Activated CD8-positive, alpha-beta T cell treated with anti-CD3 and anti-CD28 coated beads, Interleukin-2, amount 10 ng/mL, durations not matched to agents 7 days and 5 days (primary cell): ENCODE measurements at regions of chr2 and their contacts with region 1.

Region 1: GRCh38 chr2:85551698-85552678 is 9.3 kb downstream of the GGCX start:
- DNase-seq: peak; percentile 94
- ATAC-seq: peak; percentile 79
- H3K4me3 Mint-ChIP-seq: no peak overlapping the region
- H3K27ac Mint-ChIP-seq: peak overlapping the region; percentile 23
- H3K4me1 Mint-ChIP-seq: peaks cover 6% of the 10 kb centered on the region
- H3K27me3 Mint-ChIP-seq: no peaks in the 10 kb centered on the region

Region 2: DNA sequence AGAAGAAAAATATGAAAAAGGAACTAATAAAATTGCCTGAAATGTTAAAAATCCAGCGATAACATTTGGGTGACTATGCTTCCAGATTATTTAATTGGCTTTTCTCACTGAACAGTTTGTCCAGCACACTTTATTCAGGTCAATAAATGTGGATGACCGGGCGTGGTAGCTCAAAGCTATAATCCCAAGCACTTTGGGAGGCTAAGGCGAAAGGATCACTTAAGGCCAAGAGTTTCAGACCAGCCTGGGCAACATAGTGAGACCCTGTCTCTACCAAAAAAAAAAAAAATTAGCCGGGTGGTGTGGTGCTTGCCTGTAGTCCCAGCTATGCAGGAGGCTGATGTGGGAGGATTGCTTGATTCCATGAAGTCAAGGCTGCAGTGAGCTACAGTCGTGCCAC is 279.6 kb before region 1 on chr2:
- CTCF ChIA-PET with region 1: no interaction called
- POLR2A ChIA-PET with region 1: no interaction called
- DNase-seq: no peak
- ATAC-seq: no peak
- H3K4me3 Mint-ChIP-seq: no peak overlapping the region
- H3K27ac Mint-ChIP-seq: no peak overlapping the region
- H3K4me1 Mint-ChIP-seq: no peaks in the 10 kb centered on the region
- H3K27me3 Mint-ChIP-seq: peaks cover 12% of the 10 kb centered on the region

Region 3: GRCh38 chr2:85390941-85391669 is 160.9 kb before region 1 on chr2:
- CTCF ChIA-PET with region 1: interaction called, 69 read pairs
- POLR2A ChIA-PET with region 1: interaction called, 4 read pairs
- DNase-seq: peak; percentile 82
- ATAC-seq: peak; percentile 82
- H3K4me3 Mint-ChIP-seq: no peak overlapping the region
- H3K27ac Mint-ChIP-seq: no peak overlapping the region
- H3K4me1 Mint-ChIP-seq: peaks cover 18% of the 10 kb centered on the region
- H3K27me3 Mint-ChIP-seq: no peaks in the 10 kb centered on the region

Region 4: GRCh38 chr2:85420536-85421259 is 131.3 kb before region 1 on chr2:
- CTCF ChIA-PET with region 1: interaction called, 263 read pairs
- POLR2A ChIA-PET with region 1: interaction called, 39 read pairs
- DNase-seq: peak; percentile 92
- ATAC-seq: peak; percentile 69
- H3K4me3 Mint-ChIP-seq: peak overlapping the region; percentile 69
- H3K27ac Mint-ChIP-seq: peak overlapping the region; percentile 89
- H3K4me1 Mint-ChIP-seq: peaks cover 42% of the 10 kb centered on the region
- H3K27me3 Mint-ChIP-seq: no peaks in the 10 kb centered on the region

Region 5: GRCh38 chr2:85538486-85539360 is 13.3 kb before region 1 on chr2 and contains the start of gene MAT2A:
- CTCF ChIA-PET with region 1: interaction called, 133 read pairs
- POLR2A ChIA-PET with region 1: interaction called, 51 read pairs
- DNase-seq: peak; percentile 88
- ATAC-seq: peak; percentile 71
- H3K4me3 Mint-ChIP-seq: peak within 1 kb of the TSS; percentile 96
- H3K27ac Mint-ChIP-seq: peak within 1 kb of the TSS; percentile 98
- H3K4me1 Mint-ChIP-seq: peaks cover 51% of the 10 kb centered on the region
- H3K27me3 Mint-ChIP-seq: no peaks in the 10 kb centered on the region
- total RNA-seq, gene MAT2A: 264 to 273 TPM